ENCODE measurements at regions of chr7 and their contacts with region 1.

Region 1: GRCh38 chr7:25012254-25012653 is 32.3 kb upstream of the OSBPL3 start:
- DNase-seq: peak; percentile 38
- H3K4me3 ChIP-seq: no peak overlapping the region
- H3K27ac ChIP-seq: no peak overlapping the region
- H3K4me1 ChIP-seq: peaks cover 12% of the 10 kb centered on the region
- H3K27me3 ChIP-seq: no peaks in the 10 kb centered on the region
- CTCF ChIP-seq: no peak

Region 2: DNA sequence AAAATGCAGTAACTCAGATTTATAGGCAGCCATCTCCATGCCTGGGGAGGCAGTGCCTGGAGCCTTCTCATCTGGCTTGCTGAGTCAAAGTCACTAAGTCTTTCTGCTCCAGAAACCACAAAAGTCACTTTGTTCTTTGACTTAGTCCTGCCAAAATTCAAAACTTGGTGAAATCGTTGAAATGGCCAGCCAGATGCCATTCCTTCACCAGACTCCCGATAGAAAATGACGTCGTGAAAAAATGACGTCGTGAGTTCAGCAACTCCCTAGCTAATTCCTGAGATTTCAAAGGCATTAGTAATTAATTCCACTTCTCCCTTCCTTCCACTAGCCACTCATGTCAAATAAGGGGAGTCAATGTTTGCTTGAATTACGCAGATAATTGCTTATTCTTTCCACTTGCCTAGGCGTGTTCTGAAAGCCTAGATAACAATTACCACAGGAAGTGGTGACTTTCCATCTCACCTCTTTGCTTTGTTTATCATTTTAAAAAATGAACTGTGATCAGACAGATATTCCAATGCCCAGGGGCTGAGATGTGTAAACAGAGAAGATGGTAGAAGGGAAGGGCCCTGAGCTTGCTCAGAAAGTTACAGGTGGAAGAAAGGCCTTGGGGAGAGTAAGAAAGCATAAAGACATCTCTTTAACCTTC is 16.2 kb after region 1 on chr7:
- CTCF ChIA-PET with region 1: no interaction called
- dilution Hi-C with region 1: no loop called
- in situ Hi-C with region 1: no loop called
- intact Hi-C with region 1: loop called (anchors 2 kb)
- DNase-seq: peak; percentile 87
- H3K4me3 ChIP-seq: no peak overlapping the region
- H3K27ac ChIP-seq: peak overlapping the region; percentile 91
- H3K4me1 ChIP-seq: peaks cover 48% of the 10 kb centered on the region
- H3K27me3 ChIP-seq: no peaks in the 10 kb centered on the region
- CTCF ChIP-seq: no peak